ENCODE measurements at regions of chr19 and their contacts with region 1.

Region 1: GRCh38 chr19:16035601-16036297 is 40.5 kb upstream of the TPM4 start:
- DNase-seq: no peak
- ATAC-seq: no peak
- H3K4me3 ChIP-seq: no peak overlapping the region
- H3K27ac ChIP-seq: no peak overlapping the region
- H3K4me1 ChIP-seq: peaks cover 0 to 5% (median 0%) of the 10 kb centered on the region in 12 donors
- H3K27me3 ChIP-seq: peaks cover 0 to 4% (median 0%) of the 10 kb centered on the region in 9 donors
- CTCF ChIP-seq: no peak
- POLR2A ChIP-seq: no peak

Region 2: DNA sequence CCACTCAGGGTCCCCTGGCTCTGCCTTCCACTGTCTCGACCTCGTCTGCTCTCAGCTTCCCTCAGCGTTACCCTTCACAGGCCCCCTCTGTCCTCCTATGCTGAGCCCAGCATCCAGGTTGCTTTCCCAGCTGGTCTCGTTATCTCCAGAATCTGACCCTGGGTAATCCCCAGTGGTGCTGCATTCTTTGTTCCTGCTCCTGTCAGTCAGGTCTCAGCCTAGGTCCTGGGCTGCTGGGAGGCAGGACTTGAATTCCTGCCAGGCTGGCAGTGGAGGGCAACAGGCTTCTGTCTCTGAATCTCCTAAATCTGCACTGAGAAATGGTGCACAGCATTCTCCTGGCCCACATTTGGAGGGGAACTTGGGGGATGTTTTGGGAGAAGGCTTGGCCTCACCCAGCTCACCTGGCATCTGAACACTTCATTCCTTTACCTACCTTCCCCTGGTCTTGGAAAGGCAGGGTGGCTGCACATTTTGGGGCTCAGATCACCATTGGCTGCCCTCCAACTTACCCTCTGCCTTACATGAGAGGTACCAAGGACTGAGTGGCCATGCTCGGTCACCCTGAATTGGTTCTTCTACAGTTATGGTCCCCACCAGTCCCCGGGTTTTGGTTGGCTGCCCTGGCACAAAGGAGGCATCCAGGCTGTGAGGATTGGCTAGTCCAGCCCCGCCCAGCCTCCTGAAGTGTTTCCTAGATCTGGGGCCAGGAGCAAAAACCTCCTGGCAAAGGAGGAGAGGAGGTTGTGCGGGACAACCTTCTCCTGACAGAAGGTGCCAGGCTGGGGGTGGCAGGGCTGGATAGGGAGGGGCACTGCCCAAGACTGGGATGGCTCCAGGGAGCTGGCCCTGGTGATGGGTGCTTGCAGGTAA is 421.0 kb before region 1 on chr19 and contains the start of gene CYP4F8:
- intact Hi-C with region 1: loop called in 1 of 10 experiments (anchors 10 kb)
- DNase-seq: no peak
- ATAC-seq: no peak
- H3K4me3 ChIP-seq: no peak within 1 kb of the TSS
- H3K27ac ChIP-seq: no peak within 1 kb of the TSS
- H3K4me1 ChIP-seq: no peaks in the 10 kb centered on the region
- H3K27me3 ChIP-seq: peaks cover 0 to 37% (median under 1%) of the 10 kb centered on the region in 9 donors
- CTCF ChIP-seq: no peak
- POLR2A ChIP-seq: no peak
- total RNA-seq, gene CYP4F8: not detected